ENCODE measurements at regions of chr22 and their contacts with region 1.

Region 1: GRCh38 chr22:37472418-37473006 is 13.7 kb downstream of the MFNG start:
- DNase-seq: no peak
- H3K4me3 ChIP-seq: no peak overlapping the region
- H3K27ac ChIP-seq: no peak overlapping the region
- H3K4me1 ChIP-seq: no peaks in the 10 kb centered on the region
- H3K27me3 ChIP-seq: no peaks in the 10 kb centered on the region
- CTCF ChIP-seq: peak; percentile 49 to 71
- POLR2A ChIP-seq: no peak

Region 2: DNA sequence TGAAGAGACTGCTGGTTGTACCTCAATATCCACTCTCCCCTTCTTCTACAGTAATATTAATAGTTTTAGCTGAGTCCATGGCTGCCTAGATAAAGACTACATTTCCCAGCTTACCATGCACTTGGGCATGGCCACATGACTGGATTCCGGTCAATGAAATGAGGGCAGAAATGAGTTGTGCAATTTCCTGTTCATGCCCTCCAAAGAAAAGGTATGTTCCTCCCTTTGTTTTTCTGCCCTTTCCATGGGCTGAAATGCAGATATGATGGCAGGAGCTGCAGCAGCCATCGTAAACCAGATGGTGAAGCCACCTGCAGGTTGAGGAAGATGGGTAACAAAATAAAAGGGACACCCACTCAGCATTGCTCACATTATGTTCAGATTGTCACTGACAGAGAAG is 30.0 kb before region 1 on chr22:
- CTCF ChIA-PET with region 1: no interaction called
- POLR2A ChIA-PET with region 1: no interaction called
- dilution Hi-C with region 1: no loop called
- intact Hi-C with region 1: no loop called
- DNase-seq: no peak
- H3K4me3 ChIP-seq: no peak overlapping the region
- H3K27ac ChIP-seq: no peak overlapping the region
- H3K4me1 ChIP-seq: peaks cover 3% of the 10 kb centered on the region
- H3K27me3 ChIP-seq: peaks cover 0 to 2% of the 10 kb centered on the region in 2 experiments
- CTCF ChIP-seq: no peak
- POLR2A ChIP-seq: no peak

Region 3: GRCh38 chr22:37498289-37498909 is 25.9 kb after region 1 on chr22:
- CTCF ChIA-PET with region 1: interaction called, 12 read pairs
- POLR2A ChIA-PET with region 1: no interaction called
- dilution Hi-C with region 1: no loop called
- intact Hi-C with region 1: loop called (anchors 1 kb)
- DNase-seq: peak; percentile 20
- H3K4me3 ChIP-seq: no peak overlapping the region
- H3K27ac ChIP-seq: no peak overlapping the region
- H3K4me1 ChIP-seq: peaks cover 51% of the 10 kb centered on the region
- H3K27me3 ChIP-seq: no peaks in the 10 kb centered on the region
- CTCF ChIP-seq: peak; percentile 51 to 72
- POLR2A ChIP-seq: no peak

Region 4: GRCh38 chr22:37511395-37512104 is 39.0 kb after region 1 on chr22:
- CTCF ChIA-PET with region 1: interaction called, 10 read pairs
- POLR2A ChIA-PET with region 1: no interaction called
- dilution Hi-C with region 1: no loop called
- intact Hi-C with region 1: no loop called
- DNase-seq: no peak
- H3K4me3 ChIP-seq: no peak overlapping the region
- H3K27ac ChIP-seq: peak overlapping the region; percentile 35
- H3K4me1 ChIP-seq: peaks cover 23% of the 10 kb centered on the region
- H3K27me3 ChIP-seq: no peaks in the 10 kb centered on the region
- CTCF ChIP-seq: no peak
- POLR2A ChIP-seq: no peak

Region 5: DNA sequence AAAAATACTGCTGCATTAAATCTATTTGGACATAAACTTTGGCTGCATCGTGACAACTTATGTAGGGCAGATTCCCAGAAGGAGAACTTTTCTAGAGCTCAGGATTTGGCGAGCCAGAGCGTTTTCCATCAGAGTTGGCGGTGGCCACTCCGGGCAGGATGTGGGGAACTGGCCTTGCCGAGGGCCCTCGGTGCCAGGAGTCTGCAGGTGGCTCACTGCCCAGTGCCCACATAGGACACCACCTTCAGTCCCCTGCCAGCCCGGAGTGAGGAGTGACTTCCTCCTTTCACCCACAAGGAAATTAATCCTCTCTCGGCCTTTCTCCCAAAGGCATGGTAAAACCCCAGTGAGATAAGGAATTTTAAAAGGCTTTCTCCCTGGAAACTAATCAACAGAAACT is 109.0 kb after region 1 on chr22:
- CTCF ChIA-PET with region 1: no interaction called
- POLR2A ChIA-PET with region 1: no interaction called
- dilution Hi-C with region 1: no loop called
- intact Hi-C with region 1: no loop called
- DNase-seq: no peak
- H3K4me3 ChIP-seq: no peak overlapping the region
- H3K27ac ChIP-seq: no peak overlapping the region
- H3K4me1 ChIP-seq: no peaks in the 10 kb centered on the region
- H3K27me3 ChIP-seq: peaks cover 4% of the 10 kb centered on the region in 2 experiments
- CTCF ChIP-seq: no peak
- POLR2A ChIP-seq: no peak

Measured in endothelial cell of umbilical vein (primary cell).